ENCODE measurements at regions of chr20 and their contacts with region 1.

Region 1: GRCh38 chr20:62302341-62303058 is at the start of gene ADRM1:
- DNase-seq: peak; percentile 98
- H3K4me3 ChIP-seq: peak within 1 kb of the TSS; percentile 32 to 95 (median 50)
- H3K27ac ChIP-seq: peak within 1 kb of the TSS; percentile 84
- H3K4me1 ChIP-seq: peaks cover 21% of the 10 kb centered on the region
- H3K27me3 ChIP-seq: no peaks in the 10 kb centered on the region
- CTCF ChIP-seq: peak; percentile 92 to 95
- POLR2A ChIP-seq: peak; percentile 59
- total RNA-seq, gene ADRM1: 144 and 154 TPM in 2 replicates

Region 2: DNA sequence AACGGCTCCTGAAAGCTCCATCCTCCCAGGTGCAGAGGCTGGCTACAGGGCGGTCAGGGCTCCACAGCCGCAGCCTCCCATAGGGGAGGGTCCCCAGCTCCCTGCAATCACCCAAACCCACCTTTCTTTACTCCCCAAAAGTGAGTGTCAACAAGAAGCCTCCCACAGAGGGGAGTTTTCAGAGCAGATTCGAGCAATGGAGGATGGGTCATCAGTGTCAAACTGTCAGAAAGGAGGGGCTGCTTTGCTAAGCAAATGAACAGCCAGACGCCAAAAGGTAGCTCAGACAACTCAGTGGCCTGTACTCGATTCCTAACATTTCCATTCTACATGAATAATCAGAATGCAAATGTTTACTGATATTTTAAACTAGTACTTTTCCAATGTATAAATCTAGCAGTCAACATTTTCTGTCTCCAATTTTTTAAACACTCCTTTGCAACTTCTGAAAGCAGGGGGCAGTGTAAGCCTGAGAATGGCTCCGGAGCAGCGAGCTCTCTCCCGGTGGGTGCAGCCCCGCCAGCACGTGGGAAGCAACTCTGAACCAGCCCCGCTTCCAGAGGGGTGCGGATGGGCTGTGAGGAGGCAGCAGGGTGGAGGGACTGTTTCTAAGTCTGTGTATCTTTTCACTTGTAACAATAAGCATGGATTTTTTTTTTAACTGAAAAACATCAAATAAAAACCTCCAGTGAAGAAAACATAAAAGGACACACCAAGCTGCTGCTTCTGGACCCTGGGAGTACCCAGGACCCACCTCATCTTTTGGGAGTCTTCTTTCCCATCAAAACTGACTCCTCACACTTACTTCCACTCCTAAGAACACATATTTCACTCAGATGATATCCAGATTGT is 291.7 kb before region 1 on chr20:
- CTCF ChIA-PET with region 1: interaction called, 4 read pairs
- POLR2A ChIA-PET with region 1: no interaction called
- dilution Hi-C with region 1: no loop called
- intact Hi-C with region 1: loop called (anchors 2 kb)
- DNase-seq: peak; percentile 59
- H3K4me3 ChIP-seq: no peak overlapping the region
- H3K27ac ChIP-seq: no peak overlapping the region
- H3K4me1 ChIP-seq: no peaks in the 10 kb centered on the region
- H3K27me3 ChIP-seq: no peaks in the 10 kb centered on the region
- CTCF ChIP-seq: peak; percentile 46 to 58
- POLR2A ChIP-seq: no peak

Region 3: DNA sequence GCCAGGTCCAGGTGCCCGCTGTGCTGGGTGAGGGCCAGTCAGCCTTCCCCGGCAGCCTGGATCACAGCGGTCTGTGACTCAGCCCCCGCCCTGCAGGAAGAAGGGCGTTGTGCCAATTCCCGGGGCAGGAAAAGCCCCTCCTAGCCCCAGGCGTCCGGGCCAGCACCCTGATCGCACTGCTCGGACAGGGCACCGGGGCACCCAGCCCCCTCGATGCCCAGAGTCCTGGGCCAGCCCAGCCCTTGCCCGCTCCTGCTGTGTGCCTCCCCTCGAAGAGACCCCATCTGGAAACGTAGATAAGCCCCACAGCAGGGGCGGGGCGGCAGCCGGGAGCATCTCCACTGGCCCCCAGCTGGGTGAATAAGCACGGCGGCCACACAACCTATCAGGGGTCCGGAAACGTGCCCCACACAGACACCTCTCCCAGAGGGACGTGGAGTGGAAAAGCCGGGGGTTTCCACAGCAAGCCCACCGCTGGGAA is 54.7 kb after region 1 on chr20:
- CTCF ChIA-PET with region 1: interaction called, 3 read pairs
- POLR2A ChIA-PET with region 1: interaction called, 3 read pairs
- dilution Hi-C with region 1: no loop called
- intact Hi-C with region 1: loop called (anchors 1 kb)
- DNase-seq: peak; percentile 84
- H3K4me3 ChIP-seq: no peak overlapping the region
- H3K27ac ChIP-seq: peak overlapping the region; percentile 89
- H3K4me1 ChIP-seq: peaks cover 52% of the 10 kb centered on the region
- H3K27me3 ChIP-seq: no peaks in the 10 kb centered on the region
- CTCF ChIP-seq: no peak
- POLR2A ChIP-seq: peak; percentile 49

Region 4: DNA sequence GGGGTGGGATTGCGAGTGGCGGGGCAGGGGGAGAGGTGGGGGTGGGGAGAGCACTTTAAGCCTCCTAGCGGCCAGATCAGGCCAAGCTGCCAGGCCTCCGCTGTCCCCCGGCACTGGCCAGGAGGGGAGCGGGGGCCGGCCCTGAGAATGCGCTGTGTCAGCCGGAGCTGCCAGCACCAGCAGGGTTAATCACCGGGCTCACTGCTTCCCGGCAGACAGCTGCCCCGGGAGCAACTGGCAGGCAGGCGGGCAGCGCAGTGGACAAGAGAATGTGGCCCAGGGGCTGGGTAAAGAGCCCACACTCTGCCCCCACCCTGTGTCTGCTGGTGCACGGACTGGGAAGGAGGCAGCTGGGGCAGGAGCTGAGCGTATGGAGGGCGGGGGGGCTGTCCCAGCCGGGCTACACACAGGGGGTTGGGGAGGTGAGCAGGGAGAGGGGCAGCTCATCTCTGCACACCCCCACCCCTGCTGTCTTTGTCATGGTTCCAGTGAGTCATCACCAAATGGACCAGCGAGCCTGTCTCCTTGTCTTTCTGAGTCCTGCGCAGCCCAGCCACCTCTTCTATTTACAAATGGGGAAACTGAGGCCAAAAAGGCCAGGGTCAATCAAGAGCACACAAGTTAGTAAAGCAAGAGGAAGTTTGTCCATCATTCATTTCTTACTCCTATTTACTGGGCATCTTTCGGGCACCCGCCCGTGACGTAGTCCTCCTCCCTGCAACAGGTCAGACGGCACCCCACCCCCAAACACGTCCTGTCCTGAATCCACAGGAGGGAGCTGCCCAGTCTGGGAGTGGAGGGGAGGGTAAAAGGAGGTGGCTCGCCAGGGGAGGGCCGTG is 66.7 kb after region 1 on chr20:
- CTCF ChIA-PET with region 1: interaction called, 14 read pairs
- POLR2A ChIA-PET with region 1: interaction called, 4 read pairs
- dilution Hi-C with region 1: no loop called
- intact Hi-C with region 1: loop called (anchors 1 kb)
- DNase-seq: peak; percentile 50
- H3K4me3 ChIP-seq: no peak overlapping the region
- H3K27ac ChIP-seq: no peak overlapping the region
- H3K4me1 ChIP-seq: peaks cover 33% of the 10 kb centered on the region
- H3K27me3 ChIP-seq: no peaks in the 10 kb centered on the region
- CTCF ChIP-seq: peak; percentile 31 to 62
- POLR2A ChIP-seq: no peak

Region 5: DNA sequence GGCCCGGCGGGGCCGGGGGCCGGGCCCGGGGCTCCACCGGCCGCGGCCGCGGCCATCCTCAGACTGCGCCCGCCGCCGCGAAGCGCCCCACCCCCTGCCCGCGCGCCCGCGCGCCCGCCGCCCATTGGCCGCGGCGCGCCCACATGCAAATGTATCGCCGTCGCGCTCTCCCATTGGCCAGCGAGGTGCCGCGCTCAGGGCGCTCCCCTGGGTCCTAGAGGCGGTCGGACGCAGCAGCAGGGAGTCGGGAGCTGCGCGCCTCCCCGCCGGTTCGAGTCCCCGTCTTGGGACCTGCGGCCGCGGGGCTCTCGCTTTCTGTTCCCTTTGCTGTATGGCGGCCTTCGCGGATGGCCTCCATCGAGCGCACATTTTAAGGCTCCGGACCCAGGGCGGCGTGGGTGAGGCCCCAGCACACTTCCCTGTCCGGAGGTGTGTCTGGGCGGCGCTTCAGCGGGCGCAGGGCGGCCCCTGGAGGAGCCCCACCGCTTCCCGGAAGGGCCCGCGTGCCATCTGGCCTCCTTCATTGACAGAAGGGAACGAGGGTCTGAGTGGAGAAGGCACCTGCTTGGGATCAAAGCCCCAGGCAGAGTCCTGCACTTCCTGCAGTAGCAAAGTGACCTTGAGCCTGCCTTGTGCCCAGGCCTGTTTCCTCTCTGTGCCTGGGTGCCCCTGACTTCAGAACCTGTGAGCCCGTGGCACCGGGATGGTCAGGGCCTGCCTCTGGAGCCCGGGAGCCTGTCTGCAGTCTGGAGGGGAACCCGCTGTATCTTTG is 104.9 kb after region 1 on chr20 and contains the start of gene CABLES2:
- CTCF ChIA-PET with region 1: interaction called, 6 read pairs
- POLR2A ChIA-PET with region 1: no interaction called
- dilution Hi-C with region 1: no loop called
- intact Hi-C with region 1: loop called (anchors 1 kb)
- DNase-seq: peak; percentile 89
- H3K4me3 ChIP-seq: peak within 1 kb of the TSS in 2 of 3 experiments; percentile 17 to 68
- H3K27ac ChIP-seq: no peak within 1 kb of the TSS
- H3K4me1 ChIP-seq: peaks cover 11% of the 10 kb centered on the region
- H3K27me3 ChIP-seq: no peaks in the 10 kb centered on the region
- CTCF ChIP-seq: no peak
- POLR2A ChIP-seq: no peak
- total RNA-seq, gene CABLES2: 9.9 TPM in 2 replicates

Region 6: GRCh38 chr20:62616728-62617621 is 314.5 kb after region 1 on chr20:
- CTCF ChIA-PET with region 1: no interaction called
- POLR2A ChIA-PET with region 1: no interaction called
- dilution Hi-C with region 1: no loop called
- intact Hi-C with region 1: loop called (anchors 2 kb)
- DNase-seq: peak; percentile 75
- H3K4me3 ChIP-seq: no peak overlapping the region
- H3K27ac ChIP-seq: no peak overlapping the region
- H3K4me1 ChIP-seq: peaks cover 20% of the 10 kb centered on the region
- H3K27me3 ChIP-seq: no peaks in the 10 kb centered on the region
- CTCF ChIP-seq: peak; percentile 96 to 99
- POLR2A ChIP-seq: no peak